ENCODE measurements at regions of chr12 and their contacts with region 1.

Region 1: DNA sequence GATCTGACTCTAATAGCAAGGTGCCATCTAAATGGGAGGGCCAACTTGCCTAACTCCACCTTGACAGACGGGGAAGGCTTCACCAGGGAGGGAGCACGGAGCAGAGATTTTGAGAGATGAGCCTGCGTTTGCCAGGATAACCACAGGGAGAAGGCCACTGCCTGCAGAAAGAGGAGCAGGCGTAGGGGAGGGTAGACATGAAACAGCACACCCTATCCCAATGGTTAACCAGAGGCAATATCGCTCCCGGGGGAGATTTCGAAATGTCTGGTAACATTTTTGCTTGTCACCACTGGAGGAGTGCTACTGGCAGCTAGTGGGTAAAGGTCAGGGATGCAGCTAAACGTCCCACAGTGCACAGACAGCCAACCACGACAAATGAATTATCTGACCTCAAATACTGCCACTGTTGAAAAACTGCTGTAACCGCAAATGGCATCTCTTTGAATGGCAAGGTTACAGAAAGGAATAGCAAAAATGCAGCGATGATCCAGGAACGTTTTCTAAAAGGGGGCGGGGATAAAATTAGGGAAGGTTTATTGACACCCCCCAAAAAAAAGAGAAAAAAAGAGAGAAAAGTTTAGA is 126.0 kb upstream of the ATF7IP start:
- DNase-seq: peak; percentile 80
- ATAC-seq: peak; percentile 79
- H3K4me3 ChIP-seq: peak overlapping the region; percentile 26 to 53 (median 39)
- H3K4me3 Mint-ChIP-seq: peak overlapping the region; percentile 88
- H3K27ac ChIP-seq: peak overlapping the region; percentile 96 to 99
- H3K27ac Mint-ChIP-seq: peak overlapping the region; percentile 100
- H3K4me1 ChIP-seq: peaks cover 34 to 35% of the 10 kb centered on the region in 2 donors
- H3K4me1 Mint-ChIP-seq: peaks cover 35% of the 10 kb centered on the region
- H3K27me3 ChIP-seq: no peaks in the 10 kb centered on the region
- H3K27me3 Mint-ChIP-seq: no peaks in the 10 kb centered on the region
- CTCF ChIP-seq: no peak

Region 2: GRCh38 chr12:12266873-12267741 is 1972.3 kb before region 1 on chr12 and contains the start of gene LRP6:
- CTCF ChIA-PET with region 1: no interaction called
- POLR2A ChIA-PET with region 1: no interaction called
- intact Hi-C with region 1: no loop called
- DNase-seq: peak; percentile 84
- ATAC-seq: peak; percentile 83
- H3K4me3 ChIP-seq: peak within 1 kb of the TSS; percentile 41 to 77 (median 67)
- H3K4me3 Mint-ChIP-seq: peak within 1 kb of the TSS; percentile 90
- H3K27ac ChIP-seq: no peak within 1 kb of the TSS
- H3K27ac Mint-ChIP-seq: peak within 1 kb of the TSS; percentile 61
- H3K4me1 ChIP-seq: peaks cover 15 to 17% of the 10 kb centered on the region in 2 donors
- H3K4me1 Mint-ChIP-seq: peaks cover 21% of the 10 kb centered on the region
- H3K27me3 ChIP-seq: peaks cover 0 to 36% (median 25%) of the 10 kb centered on the region in 4 experiments
- H3K27me3 Mint-ChIP-seq: peaks cover 39% of the 10 kb centered on the region
- CTCF ChIP-seq: no peak
- total RNA-seq, gene LRP6: 2.8 TPM in 2 replicates

Region 3: DNA sequence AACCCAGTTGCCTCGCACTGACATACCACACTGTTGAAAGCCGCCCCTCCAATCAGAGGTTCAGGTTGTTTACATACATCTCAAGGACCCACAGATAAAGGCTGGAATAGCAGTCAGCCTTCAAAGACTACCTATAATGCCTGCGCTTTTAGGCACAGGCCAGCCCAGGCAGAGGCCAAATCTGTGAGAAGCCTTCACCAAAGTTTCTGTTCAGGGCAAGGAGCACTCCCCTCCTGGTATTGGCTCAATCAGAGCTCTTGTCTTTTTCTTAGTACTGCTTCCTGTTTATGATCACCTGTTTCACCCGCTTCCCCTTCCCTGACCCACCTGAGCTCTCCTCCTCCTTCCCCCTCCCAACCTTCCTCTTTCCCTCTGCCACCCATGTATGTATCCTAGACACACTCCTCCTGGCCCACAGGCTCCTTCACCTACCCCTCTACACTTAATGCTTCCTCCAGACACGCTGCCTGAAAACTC is 1711.6 kb before region 1 on chr12:
- CTCF ChIA-PET with region 1: no interaction called
- POLR2A ChIA-PET with region 1: no interaction called
- intact Hi-C with region 1: no loop called
- DNase-seq: no peak
- ATAC-seq: no peak
- H3K4me3 ChIP-seq: no peak overlapping the region
- H3K4me3 Mint-ChIP-seq: no peak overlapping the region
- H3K27ac ChIP-seq: no peak overlapping the region
- H3K27ac Mint-ChIP-seq: no peak overlapping the region
- H3K4me1 ChIP-seq: no peaks in the 10 kb centered on the region
- H3K4me1 Mint-ChIP-seq: peaks cover 2% of the 10 kb centered on the region
- H3K27me3 ChIP-seq: no peaks in the 10 kb centered on the region
- H3K27me3 Mint-ChIP-seq: peaks cover 3% of the 10 kb centered on the region
- CTCF ChIP-seq: no peak

Region 4: DNA sequence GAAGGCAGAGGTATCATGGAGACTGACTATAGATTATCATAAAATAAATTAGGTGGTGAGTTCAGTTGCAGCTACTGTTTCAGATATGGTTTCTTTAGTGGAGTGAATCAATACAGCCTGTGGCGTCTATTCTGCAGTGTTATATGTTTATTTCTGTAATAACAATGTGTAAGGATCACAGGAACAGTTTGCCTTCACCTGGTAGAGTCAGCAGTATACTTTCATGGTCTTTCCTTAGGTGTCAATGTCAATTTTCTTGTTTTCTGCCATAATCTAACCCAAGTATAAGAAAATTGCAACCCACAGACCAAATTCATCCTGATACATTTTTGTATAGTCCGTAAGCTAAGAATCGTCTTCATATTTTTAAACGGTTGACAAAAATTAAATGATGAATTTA is 14.4 kb before region 1 on chr12:
- CTCF ChIA-PET with region 1: interaction called, 12 read pairs
- POLR2A ChIA-PET with region 1: no interaction called
- intact Hi-C with region 1: no loop called
- DNase-seq: no peak
- ATAC-seq: no peak
- H3K4me3 ChIP-seq: no peak overlapping the region
- H3K4me3 Mint-ChIP-seq: no peak overlapping the region
- H3K27ac ChIP-seq: no peak overlapping the region
- H3K27ac Mint-ChIP-seq: no peak overlapping the region
- H3K4me1 ChIP-seq: peaks cover 0 to 5% of the 10 kb centered on the region in 2 donors
- H3K4me1 Mint-ChIP-seq: peaks cover 8% of the 10 kb centered on the region
- H3K27me3 ChIP-seq: no peaks in the 10 kb centered on the region
- H3K27me3 Mint-ChIP-seq: no peaks in the 10 kb centered on the region
- CTCF ChIP-seq: no peak

Region 5: DNA sequence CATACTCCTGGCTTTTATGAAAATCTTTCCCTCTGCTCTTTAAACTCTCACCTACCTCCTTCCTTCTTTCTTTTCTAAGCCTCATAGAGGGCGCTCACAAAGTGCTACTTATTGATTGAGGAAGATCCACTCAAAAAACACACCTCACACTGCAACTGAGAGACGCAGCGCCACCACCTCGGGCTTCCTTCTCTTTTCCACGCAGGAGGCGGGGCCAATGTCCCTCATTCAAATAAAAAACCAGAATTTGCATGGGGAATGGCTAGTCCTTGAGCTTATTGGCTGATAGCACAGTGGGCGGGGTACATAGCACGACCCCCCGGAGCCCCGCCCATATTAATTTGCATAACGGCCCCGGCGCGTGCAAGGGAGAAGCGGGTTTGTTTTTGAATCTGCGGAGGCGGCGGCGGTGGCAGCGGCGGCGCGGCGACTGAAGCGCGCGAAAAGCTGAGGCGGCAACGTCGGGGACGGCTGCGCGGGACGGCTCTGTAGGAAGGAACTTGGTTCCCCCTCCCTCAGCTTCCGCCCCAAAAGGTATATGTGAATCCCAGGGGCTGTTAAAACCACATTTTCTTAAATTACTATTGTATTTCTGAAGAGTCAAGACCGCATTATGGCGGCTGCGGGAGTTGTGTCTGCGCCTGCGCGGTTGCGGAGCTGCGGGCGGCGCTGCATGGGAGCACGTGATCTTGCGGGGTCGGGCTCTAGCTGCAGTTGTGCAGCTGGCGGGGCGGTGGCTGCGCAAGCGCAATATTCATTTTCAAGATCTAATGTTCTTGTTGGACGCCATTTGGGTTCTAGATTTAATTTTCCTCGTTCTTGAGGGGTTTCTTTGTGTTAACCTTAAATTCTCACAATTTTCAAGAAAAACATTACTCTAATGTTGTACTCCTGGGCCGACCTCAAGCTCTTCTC is 126.1 kb after region 1 on chr12 and contains the start of gene ATF7IP:
- CTCF ChIA-PET with region 1: interaction called, 81 read pairs
- POLR2A ChIA-PET with region 1: interaction called, 32 read pairs
- intact Hi-C with region 1: loop called (anchors 1 kb)
- DNase-seq: peak; percentile 99
- ATAC-seq: peak; percentile 83
- H3K4me3 ChIP-seq: peak within 1 kb of the TSS; percentile 71 to 97 (median 82)
- H3K4me3 Mint-ChIP-seq: peak within 1 kb of the TSS; percentile 84
- H3K27ac ChIP-seq: peak within 1 kb of the TSS; percentile 98 to 99
- H3K27ac Mint-ChIP-seq: peak within 1 kb of the TSS; percentile 95
- H3K4me1 ChIP-seq: peaks cover 45 to 46% of the 10 kb centered on the region in 2 donors
- H3K4me1 Mint-ChIP-seq: peaks cover 40% of the 10 kb centered on the region
- H3K27me3 ChIP-seq: no peaks in the 10 kb centered on the region
- H3K27me3 Mint-ChIP-seq: no peaks in the 10 kb centered on the region
- CTCF ChIP-seq: peak; percentile 49
- total RNA-seq, gene ATF7IP: 201 and 208 TPM in 2 replicates

Region 6: GRCh38 chr12:14577344-14577743 is 337.9 kb after region 1 on chr12:
- CTCF ChIA-PET with region 1: interaction called, 10 read pairs
- POLR2A ChIA-PET with region 1: no interaction called
- intact Hi-C with region 1: no loop called
- DNase-seq: peak; percentile 15
- ATAC-seq: no peak
- H3K4me3 ChIP-seq: no peak overlapping the region
- H3K4me3 Mint-ChIP-seq: no peak overlapping the region
- H3K27ac ChIP-seq: no peak overlapping the region
- H3K27ac Mint-ChIP-seq: peak overlapping the region; percentile 4
- H3K4me1 ChIP-seq: peaks cover 6 to 23% of the 10 kb centered on the region in 2 donors
- H3K4me1 Mint-ChIP-seq: peaks cover 27% of the 10 kb centered on the region
- H3K27me3 ChIP-seq: peaks cover 0 to 2% (median 0%) of the 10 kb centered on the region in 4 experiments
- H3K27me3 Mint-ChIP-seq: no peaks in the 10 kb centered on the region
- CTCF ChIP-seq: no peak

Region 7: DNA sequence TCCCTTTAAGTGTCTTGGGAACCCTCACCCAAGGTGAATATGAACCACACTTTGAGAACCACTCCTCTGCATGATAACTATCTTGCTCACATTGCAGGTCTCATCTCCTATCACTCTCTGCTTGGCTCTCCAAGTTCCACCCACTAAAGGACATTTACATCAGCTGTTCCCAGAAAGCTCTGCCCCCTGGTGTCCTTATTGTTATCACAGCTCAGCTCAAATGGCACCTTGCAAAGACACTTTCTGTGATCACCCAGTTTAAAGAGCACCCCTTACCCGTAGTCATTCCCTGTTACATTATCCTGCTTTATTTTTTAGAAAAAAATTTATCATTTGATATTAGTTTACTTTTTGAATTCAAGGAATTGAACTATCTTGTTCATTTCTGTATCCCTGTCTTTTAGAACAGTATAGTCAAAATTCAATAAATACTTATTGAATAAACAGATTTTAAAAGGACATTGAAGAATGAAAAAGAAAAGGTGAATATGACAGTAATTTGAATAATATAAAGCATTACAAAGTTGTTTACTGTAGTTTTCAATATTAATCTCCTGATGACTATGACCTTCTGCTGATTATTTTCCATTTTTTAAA is 477.5 kb after region 1 on chr12:
- CTCF ChIA-PET with region 1: interaction called, 39 read pairs
- POLR2A ChIA-PET with region 1: no interaction called
- intact Hi-C with region 1: loop called (anchors 1 kb)
- DNase-seq: peak; percentile 72
- ATAC-seq: peak; percentile 69
- H3K4me3 ChIP-seq: no peak overlapping the region
- H3K4me3 Mint-ChIP-seq: no peak overlapping the region
- H3K27ac ChIP-seq: no peak overlapping the region
- H3K27ac Mint-ChIP-seq: no peak overlapping the region
- H3K4me1 ChIP-seq: no peaks in the 10 kb centered on the region
- H3K4me1 Mint-ChIP-seq: no peaks in the 10 kb centered on the region
- H3K27me3 ChIP-seq: no peaks in the 10 kb centered on the region
- H3K27me3 Mint-ChIP-seq: peaks cover 9% of the 10 kb centered on the region
- CTCF ChIP-seq: peak; percentile 71

Region 8: GRCh38 chr12:15882118-15882971 is 1642.9 kb after region 1 on chr12 and contains the start of gene STRAP:
- CTCF ChIA-PET with region 1: no interaction called
- POLR2A ChIA-PET with region 1: no interaction called
- intact Hi-C with region 1: loop called (anchors 5 kb)
- DNase-seq: peak; percentile 98
- ATAC-seq: peak; percentile 93
- H3K4me3 ChIP-seq: peak within 1 kb of the TSS; percentile 60 to 97 (median 92)
- H3K4me3 Mint-ChIP-seq: peak within 1 kb of the TSS; percentile 100
- H3K27ac ChIP-seq: peak within 1 kb of the TSS; percentile 98 to 99
- H3K27ac Mint-ChIP-seq: peak within 1 kb of the TSS; percentile 99
- H3K4me1 ChIP-seq: peaks cover 14 to 19% of the 10 kb centered on the region in 2 donors
- H3K4me1 Mint-ChIP-seq: peaks cover 51% of the 10 kb centered on the region
- H3K27me3 ChIP-seq: no peaks in the 10 kb centered on the region
- H3K27me3 Mint-ChIP-seq: no peaks in the 10 kb centered on the region
- CTCF ChIP-seq: no peak
- total RNA-seq, gene STRAP: 44.7 and 49.0 TPM in 2 replicates